Activated T-helper 2 cell treated with anti-CD3 and anti-CD28 coated beads, Interferon-gamma antibody, Interleukin-2, Interleukin-4, amounts not matched to agents 10 μg/mL and 5 μg/mL and 100 μg/mL, durations not matched to agents 14 hours and 24 hours and 36 hours (primary cell): ENCODE measurements at regions of chrX and their contacts with region 1.

Region 1: DNA sequence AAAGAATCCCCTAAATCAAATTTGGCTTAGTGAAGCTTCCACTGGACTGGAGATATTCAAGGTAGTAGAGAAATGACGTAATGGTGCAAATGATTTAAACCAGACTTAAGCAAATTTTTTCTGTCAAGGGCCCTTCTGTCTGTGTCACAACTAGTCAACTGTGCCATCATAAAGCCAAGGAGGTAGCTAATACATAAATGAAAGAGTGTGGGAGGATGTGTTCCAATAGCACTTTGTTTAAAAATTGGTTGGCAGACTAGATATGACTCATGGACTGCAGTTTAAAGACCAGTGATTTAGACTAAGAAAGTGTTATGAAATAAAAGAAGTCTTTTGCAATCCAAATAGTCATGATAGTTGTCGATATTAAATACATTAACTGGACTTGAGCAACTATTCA is 24.3 kb upstream of the TEX13C start:
- DNase-seq: no peak
- H3K4me3 Mint-ChIP-seq: no peak overlapping the region
- H3K27ac Mint-ChIP-seq: peak overlapping the region; percentile 81
- H3K4me1 Mint-ChIP-seq: peaks cover 21% of the 10 kb centered on the region
- H3K27me3 Mint-ChIP-seq: no peaks in the 10 kb centered on the region

Region 2: GRCh38 chrX:124211312-124211942 is 1083.9 kb before region 1 on chrX:
- intact Hi-C with region 1: loop called (anchors 10 kb)
- DNase-seq: no peak
- H3K4me3 Mint-ChIP-seq: no peak overlapping the region
- H3K27ac Mint-ChIP-seq: no peak overlapping the region
- H3K4me1 Mint-ChIP-seq: peaks cover 40% of the 10 kb centered on the region
- H3K27me3 Mint-ChIP-seq: peaks cover 5% of the 10 kb centered on the region

Region 3: DNA sequence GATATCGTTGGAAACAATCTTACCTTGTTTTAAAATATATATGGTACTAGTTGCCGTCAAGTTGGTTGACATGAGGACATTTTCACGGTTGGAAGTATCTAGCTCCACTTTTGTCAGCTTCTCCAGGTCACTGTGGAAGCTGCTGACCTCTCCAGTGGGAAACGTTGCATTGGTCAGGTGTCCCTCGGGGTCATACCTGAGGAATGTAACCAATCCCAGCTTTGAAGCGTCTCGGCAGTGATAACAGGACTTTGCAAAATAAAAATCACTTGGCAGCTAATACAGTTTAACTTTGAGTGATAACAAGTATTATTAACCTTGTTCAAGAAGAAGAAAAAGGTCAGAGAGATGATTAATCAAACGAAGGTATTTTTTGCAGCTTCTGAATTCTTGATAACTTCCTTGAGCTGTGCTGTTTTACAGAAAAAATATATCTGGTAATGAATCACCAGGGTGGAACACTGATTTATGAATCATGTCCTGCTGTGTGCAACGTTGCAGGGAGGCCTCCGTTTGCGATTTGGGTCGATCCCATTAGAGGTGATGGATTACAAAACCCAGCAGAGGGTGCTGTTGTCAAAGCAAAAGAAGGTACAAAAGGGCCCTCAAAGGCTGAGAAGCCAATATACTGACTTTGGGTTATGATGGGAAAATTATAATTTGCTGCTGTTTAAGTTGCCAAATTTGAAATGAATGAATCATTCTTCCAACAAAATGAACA is 888.9 kb before region 1 on chrX:
- intact Hi-C with region 1: loop called (anchors 1 kb)
- DNase-seq: peak; percentile 33
- H3K4me3 Mint-ChIP-seq: no peak overlapping the region
- H3K27ac Mint-ChIP-seq: no peak overlapping the region
- H3K4me1 Mint-ChIP-seq: peaks cover 12% of the 10 kb centered on the region
- H3K27me3 Mint-ChIP-seq: no peaks in the 10 kb centered on the region

Region 4: DNA sequence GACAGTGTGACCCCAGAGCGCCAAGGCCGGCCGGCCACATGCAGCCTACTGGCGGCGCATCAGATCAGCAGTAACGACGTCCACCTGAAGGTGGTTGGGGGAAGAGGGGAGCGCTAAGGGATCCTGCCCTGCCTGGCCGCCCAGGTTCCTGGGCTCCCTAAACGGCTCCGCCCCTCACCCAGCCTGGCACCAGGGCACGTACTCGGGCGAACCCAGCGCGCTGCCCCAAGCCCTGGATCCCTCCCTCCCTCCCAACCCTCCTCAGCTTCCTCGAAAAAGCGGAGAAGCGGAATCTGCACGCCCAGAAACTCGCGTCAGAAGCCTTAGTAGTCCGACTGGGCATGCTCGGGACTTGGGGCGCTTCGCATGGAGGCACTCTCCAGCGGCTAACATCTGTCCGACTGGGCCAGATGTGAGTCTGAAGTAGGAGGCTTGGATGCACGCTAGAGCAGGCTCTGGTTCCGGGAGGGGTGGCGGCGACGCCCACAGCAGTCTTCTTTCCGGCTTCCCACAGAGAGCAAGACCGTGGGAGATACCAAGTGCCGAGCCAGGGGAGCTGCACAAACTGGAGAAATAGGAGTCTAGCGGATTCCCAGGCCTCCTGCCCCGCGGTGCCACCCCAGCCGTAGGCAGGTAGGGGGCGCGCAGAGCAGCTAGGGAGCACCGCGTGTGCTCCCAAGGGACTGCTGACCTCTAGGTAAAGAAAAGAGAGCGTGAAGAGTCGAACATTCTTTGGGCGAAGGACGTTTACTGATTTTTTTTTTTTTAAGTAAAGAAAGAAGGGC is 90.0 kb before region 1 on chrX:
- intact Hi-C with region 1: loop called (anchors 10 kb)
- DNase-seq: no peak
- H3K4me3 Mint-ChIP-seq: peak overlapping the region; percentile 73
- H3K27ac Mint-ChIP-seq: no peak overlapping the region
- H3K4me1 Mint-ChIP-seq: peaks cover 19% of the 10 kb centered on the region
- H3K27me3 Mint-ChIP-seq: peaks cover 48% of the 10 kb centered on the region

Region 5: DNA sequence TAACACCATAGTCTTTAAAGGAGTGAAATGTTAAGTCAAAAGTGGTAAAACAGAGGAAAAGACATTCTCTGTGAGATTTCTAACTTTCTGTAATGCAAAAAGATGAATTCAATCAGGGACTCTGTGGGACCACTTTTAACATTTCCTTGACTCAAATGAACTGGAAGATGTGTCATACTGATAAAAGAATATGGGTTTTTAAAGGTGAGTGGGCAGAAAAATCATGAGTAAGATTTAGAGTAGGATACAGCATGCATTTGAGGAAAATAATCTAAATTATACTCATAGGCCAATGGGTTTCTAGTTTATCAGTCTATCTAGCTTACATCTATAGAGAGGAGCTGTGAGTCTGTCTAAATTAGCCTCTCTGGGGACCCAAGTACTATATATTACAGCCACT is 13.3 kb after region 1 on chrX:
- intact Hi-C with region 1: loop called (anchors 1 kb)
- DNase-seq: no peak
- H3K4me3 Mint-ChIP-seq: no peak overlapping the region
- H3K27ac Mint-ChIP-seq: no peak overlapping the region
- H3K4me1 Mint-ChIP-seq: peaks cover 9% of the 10 kb centered on the region
- H3K27me3 Mint-ChIP-seq: peaks cover 8% of the 10 kb centered on the region